Cardiac septum (tissue), 1 donor: ENCODE measurements at regions of chrX and their contacts with region 1.

Region 1: GRCh38 chrX:138745196-138745595 is 33.7 kb upstream of the FGF13 start:
- DNase-seq: no peak

Region 2: GRCh38 chrX:138191998-138192397 is 553.2 kb before region 1 on chrX:
- intact Hi-C with region 1: loop called (anchors 10 kb)
- DNase-seq: no peak

Region 3: GRCh38 chrX:138683600-138683999 is 61.6 kb before region 1 on chrX:
- intact Hi-C with region 1: no loop called
- DNase-seq: no peak

Region 4: DNA sequence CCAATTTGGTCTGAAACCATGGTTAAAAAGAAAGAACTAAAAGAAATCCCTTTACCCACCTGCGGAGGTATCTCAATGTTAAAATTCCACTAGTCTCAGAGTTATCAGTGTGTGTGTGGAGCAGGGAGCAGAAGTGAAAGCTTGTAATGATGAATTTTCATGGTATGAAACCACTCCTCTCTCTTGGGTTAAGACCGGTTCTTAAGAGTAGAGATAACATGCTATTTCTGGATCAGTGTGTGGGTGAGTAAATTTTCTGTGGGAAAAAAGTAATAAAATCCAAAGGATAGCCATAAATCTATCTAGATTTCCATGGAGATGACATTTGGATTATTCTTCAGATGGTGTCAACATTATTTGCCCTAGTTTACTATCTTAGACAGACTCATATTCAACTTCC is 36.9 kb before region 1 on chrX:
- intact Hi-C with region 1: no loop called
- DNase-seq: no peak